PC-9 (cell line): ENCODE measurements at regions of chr9 and their contacts with region 1.

Region 1: DNA sequence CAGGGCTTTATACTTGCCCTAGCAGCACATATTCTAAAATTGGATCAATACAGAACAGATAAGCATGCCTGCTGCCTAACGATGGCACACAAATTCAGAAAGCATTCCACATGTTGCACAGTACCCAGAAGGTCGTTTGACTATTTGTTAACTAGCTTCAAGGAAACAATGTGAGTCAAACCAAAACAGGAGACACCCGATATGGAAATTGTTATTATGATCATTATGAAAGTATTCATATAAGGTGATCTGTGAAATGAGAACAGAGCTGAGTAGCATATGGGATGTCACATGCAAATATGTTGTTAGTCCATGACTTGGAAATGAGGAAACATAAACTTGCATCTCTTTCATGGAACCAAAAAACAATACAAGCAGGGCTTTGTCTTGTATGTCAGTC is 56.3 kb upstream of the BICD2 start:
- DNase-seq: no peak
- H3K4me3 ChIP-seq: no peak overlapping the region
- H3K27ac ChIP-seq: no peak overlapping the region
- H3K4me1 ChIP-seq: no peaks in the 10 kb centered on the region
- H3K27me3 ChIP-seq: no peaks in the 10 kb centered on the region
- CTCF ChIP-seq: no peak

Region 2: DNA sequence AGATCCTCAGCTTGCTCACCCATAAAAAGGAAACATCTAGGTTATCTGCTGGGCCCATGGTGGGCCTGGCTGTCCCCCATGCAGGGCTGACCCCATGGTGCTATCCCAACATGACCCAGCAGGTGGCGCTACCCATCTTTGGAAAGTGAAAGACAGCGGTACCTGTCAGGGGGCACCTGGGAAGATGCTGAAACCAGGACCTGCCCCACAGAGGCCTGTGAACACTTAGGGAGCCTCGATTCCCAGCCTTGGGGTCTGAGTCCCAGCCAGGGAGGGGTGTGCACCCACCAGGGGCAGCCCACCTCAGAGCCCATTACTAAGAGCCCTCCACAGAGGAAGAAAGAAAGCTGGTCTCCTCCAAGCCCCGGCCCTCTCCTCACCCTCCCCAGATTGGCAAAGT is 104.4 kb before region 1 on chr9:
- CTCF ChIA-PET with region 1: no interaction called
- POLR2A ChIA-PET with region 1: no interaction called
- intact Hi-C with region 1: no loop called
- DNase-seq: peak in 1 of 2 experiments; percentile 77
- H3K4me3 ChIP-seq: no peak overlapping the region
- H3K27ac ChIP-seq: no peak overlapping the region
- H3K4me1 ChIP-seq: no peaks in the 10 kb centered on the region
- H3K27me3 ChIP-seq: no peaks in the 10 kb centered on the region
- CTCF ChIP-seq: peak; percentile 95

Region 3: GRCh38 chr9:92774274-92774673 is 46.7 kb before region 1 on chr9:
- CTCF ChIA-PET with region 1: no interaction called
- POLR2A ChIA-PET with region 1: interaction called, 26 read pairs
- intact Hi-C with region 1: no loop called
- DNase-seq: peak; percentile 22 to 78
- H3K4me3 ChIP-seq: no peak overlapping the region
- H3K27ac ChIP-seq: no peak overlapping the region
- H3K4me1 ChIP-seq: no peaks in the 10 kb centered on the region
- H3K27me3 ChIP-seq: no peaks in the 10 kb centered on the region
- CTCF ChIP-seq: no peak